AG04449 (cell line): ENCODE measurements at regions of chr1 and their contacts with region 1.

Region 1: GRCh38 chr1:941588-942383 is 17.3 kb downstream of the NOC2L start:
- DNase-seq: no peak
- H3K4me3 ChIP-seq: peak overlapping the region; percentile 36
- CTCF ChIP-seq: no peak

Region 2: GRCh38 chr1:923131-923990 is 18.4 kb before region 1 on chr1 and contains the start of gene SAMD11:
- CTCF ChIA-PET with region 1: interaction called, 29 read pairs
- POLR2A ChIA-PET with region 1: interaction called, 3 read pairs
- DNase-seq: peak; percentile 17
- H3K4me3 ChIP-seq: peak within 1 kb of the TSS; percentile 59
- CTCF ChIP-seq: no peak

Region 3: GRCh38 chr1:1200851-1201810 is 259.3 kb after region 1 on chr1:
- CTCF ChIA-PET with region 1: no interaction called
- POLR2A ChIA-PET with region 1: no interaction called
- DNase-seq: no peak
- H3K4me3 ChIP-seq: peak overlapping the region; percentile 48
- CTCF ChIP-seq: no peak